ENCODE measurements at regions of chr18 and their contacts with region 1.

Region 1: DNA sequence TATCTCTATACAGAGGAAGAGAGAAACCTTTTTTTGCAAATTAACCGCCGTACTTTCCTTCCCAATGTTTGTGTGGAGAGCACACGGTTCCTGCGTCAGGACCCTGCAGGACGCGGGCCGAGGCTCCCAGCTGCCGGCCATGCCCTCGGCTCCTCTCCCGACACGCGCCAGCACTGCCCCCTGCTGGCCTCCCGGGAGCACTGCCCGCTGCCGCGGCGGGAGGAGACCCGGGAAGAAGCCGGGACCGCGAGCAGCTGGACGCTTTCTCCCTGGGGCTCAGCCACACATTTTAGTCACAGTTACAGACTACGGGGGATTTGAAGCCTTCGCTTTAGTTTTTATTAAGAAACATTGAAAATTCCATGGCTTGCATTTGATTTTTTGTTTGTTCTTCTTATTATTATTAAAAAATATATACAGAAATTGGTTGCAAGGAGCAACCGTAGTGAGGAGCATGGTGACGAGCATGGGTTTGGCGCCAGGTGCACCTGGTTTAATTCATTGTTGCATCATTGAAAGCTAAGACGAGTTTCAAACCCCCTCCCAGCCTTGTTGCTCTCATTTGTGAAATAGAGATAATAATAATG is 401.2 kb downstream of the GALR1 start:
- DNase-seq: peak; percentile 63 to 80
- ATAC-seq: peak; percentile 83 to 96 (median 92)
- H3K4me3 ChIP-seq: peak overlapping the region in 1 of 10 donors; percentile 8
- H3K27ac ChIP-seq: no peak overlapping the region
- H3K4me1 ChIP-seq: peaks cover 0 to 7% (median 0%) of the 10 kb centered on the region in 9 donors
- H3K27me3 ChIP-seq: peaks cover 0 to 18% (median 12%) of the 10 kb centered on the region in 7 donors
- CTCF ChIP-seq: peak; percentile 69 to 95 (median 89)

Region 2: DNA sequence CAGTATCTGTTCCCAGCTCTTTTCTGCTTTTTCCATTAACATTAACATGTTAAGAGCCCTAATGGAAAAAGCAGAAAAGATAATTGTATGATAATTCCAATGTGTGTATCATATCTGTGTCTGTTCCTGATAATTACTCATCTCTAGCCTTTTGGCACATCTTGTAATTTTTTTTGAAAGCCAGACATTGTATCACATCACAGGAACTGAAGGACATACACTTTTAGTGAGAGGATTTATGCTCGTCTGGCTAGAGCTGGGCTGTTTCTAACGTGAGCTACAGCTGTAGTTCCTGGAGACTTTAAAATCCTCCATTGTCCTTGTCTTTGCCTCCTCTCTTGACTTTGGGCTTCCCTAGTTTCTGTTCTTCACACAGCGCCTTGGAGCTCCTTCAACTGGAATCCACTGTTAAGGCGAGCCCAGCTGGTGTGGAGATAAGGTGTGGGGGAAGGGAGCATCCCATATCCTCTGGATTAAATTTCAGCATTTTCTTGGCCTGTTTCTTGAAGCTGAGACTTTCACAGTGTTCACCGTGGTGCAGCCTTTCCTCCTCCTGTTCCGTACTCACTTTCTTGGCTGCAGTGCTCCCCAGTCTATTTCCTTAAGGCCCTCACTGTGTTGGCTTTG is 189.7 kb before region 1 on chr18:
- intact Hi-C with region 1: loop called in 1 of 10 experiments (anchors 10 kb)
- DNase-seq: peak in 1 of 2 donors; percentile 36
- ATAC-seq: peak in 7 of 8 donors; percentile 72 to 88 (median 81)
- H3K4me3 ChIP-seq: no peak overlapping the region
- H3K27ac ChIP-seq: peak overlapping the region in 3 of 10 donors; percentile 12 to 53 (median 28)
- H3K4me1 ChIP-seq: no peaks in the 10 kb centered on the region
- H3K27me3 ChIP-seq: peaks cover 0 to 9% (median 0%) of the 10 kb centered on the region in 7 donors
- CTCF ChIP-seq: no peak

Region 3: GRCh38 chr18:77822632-77823031 is 171.7 kb after region 1 on chr18:
- intact Hi-C with region 1: no loop called
- DNase-seq: no peak
- ATAC-seq: no peak
- H3K4me3 ChIP-seq: no peak overlapping the region
- H3K27ac ChIP-seq: no peak overlapping the region
- H3K4me1 ChIP-seq: no peaks in the 10 kb centered on the region
- H3K27me3 ChIP-seq: peaks cover 0 to 4% (median 0%) of the 10 kb centered on the region in 7 donors
- CTCF ChIP-seq: no peak